Transverse colon (tissue), 4 donors: ENCODE measurements at regions of chr7 and their contacts with region 1.

Region 1: GRCh38 chr7:33789871-33790630 is 115.3 kb upstream of the BMPER start:
- DNase-seq: no peak
- H3K4me3 ChIP-seq: no peak overlapping the region
- H3K27ac ChIP-seq: no peak overlapping the region
- H3K4me1 ChIP-seq: no peaks in the 10 kb centered on the region
- H3K27me3 ChIP-seq: no peaks in the 10 kb centered on the region
- CTCF ChIP-seq: no peak
- EP300 ChIP-seq: no peak
- POLR2A ChIP-seq: no peak

Region 2: DNA sequence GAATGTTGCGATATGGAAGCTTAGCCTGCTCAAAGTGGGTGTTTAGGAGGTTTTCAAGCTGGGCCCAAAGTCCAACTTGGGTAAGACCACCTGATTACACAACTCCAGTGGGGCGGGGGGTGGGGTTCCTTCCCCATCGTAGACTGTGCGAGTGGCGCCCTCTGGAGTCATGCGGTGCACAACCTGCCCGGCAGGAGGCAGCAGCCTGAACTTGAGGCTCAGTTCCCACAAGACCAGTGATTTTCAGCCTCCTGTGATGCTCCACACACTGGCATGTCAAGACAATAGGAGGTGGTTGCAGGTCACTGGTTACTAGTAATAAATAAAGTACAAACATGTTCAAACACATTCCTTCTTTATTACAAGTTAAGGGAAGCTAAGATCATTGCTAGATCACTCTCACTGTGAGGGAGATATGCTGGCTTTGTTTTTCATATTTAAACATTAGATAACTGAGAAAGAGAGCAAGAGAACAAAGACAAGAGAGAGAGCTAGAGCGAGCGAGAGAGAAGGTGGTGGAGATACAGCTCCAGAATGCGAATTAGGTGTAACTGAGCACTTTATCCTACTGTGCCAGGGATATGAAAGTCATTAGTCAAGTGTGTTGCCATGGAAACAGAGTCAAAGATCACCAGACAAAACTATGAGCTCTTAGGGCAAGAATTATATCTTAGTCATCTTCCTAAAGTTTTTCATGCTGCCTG is 17.9 kb after region 1 on chr7:
- in situ Hi-C with region 1: no loop called
- intact Hi-C with region 1: loop called (anchors 1 kb)
- DNase-seq: peak; percentile 11
- H3K4me3 ChIP-seq: no peak overlapping the region
- H3K27ac ChIP-seq: no peak overlapping the region
- H3K4me1 ChIP-seq: no peaks in the 10 kb centered on the region
- H3K27me3 ChIP-seq: no peaks in the 10 kb centered on the region
- CTCF ChIP-seq: peak in 2 of 5 experiments; percentile 24 to 28
- EP300 ChIP-seq: no peak
- POLR2A ChIP-seq: no peak